CD14-positive monocyte (primary cell): ENCODE measurements at regions of chr15 and their contacts with region 1.

Region 1: DNA sequence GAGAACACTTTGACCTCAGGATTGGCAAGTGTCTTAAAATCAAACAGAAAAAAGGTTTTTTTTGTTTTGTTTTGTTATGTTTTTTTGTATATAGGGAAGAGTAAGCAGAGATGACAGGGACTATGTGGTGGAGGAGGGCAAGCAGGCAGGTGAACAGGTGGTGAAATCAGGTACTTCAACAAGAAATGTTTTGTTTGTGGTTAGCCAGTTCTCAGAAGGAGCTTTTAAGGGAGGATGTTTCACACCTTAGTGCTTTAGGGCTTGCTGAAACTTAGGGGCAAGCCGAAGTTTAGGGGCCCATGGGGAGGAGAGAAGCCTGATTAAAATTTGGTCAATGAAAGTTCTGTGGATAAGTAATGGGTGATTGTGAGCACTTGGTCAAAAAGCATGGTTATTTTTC is 370.7 kb upstream of the SLCO3A1 start:
- DNase-seq: no peak
- H3K4me3 ChIP-seq: no peak overlapping the region
- H3K4me3 Mint-ChIP-seq: no peak overlapping the region
- H3K27ac ChIP-seq: no peak overlapping the region
- H3K27ac Mint-ChIP-seq: no peak overlapping the region
- H3K4me1 ChIP-seq: no peaks in the 10 kb centered on the region
- H3K4me1 Mint-ChIP-seq: peaks cover 2% of the 10 kb centered on the region
- H3K27me3 ChIP-seq: no peaks in the 10 kb centered on the region
- H3K27me3 Mint-ChIP-seq: peaks cover 2 to 3% (median 3%) of the 10 kb centered on the region in 3 donors
- CTCF ChIP-seq: no peak

Region 2: GRCh38 chr15:91407237-91407889 is 75.4 kb before region 1 on chr15:
- intact Hi-C with region 1: no loop called
- DNase-seq: no peak
- H3K4me3 ChIP-seq: no peak overlapping the region
- H3K4me3 Mint-ChIP-seq: no peak overlapping the region
- H3K27ac ChIP-seq: no peak overlapping the region
- H3K27ac Mint-ChIP-seq: no peak overlapping the region
- H3K4me1 ChIP-seq: peaks cover 3% of the 10 kb centered on the region in 2 donors
- H3K4me1 Mint-ChIP-seq: peaks cover 5% of the 10 kb centered on the region
- H3K27me3 ChIP-seq: no peaks in the 10 kb centered on the region
- H3K27me3 Mint-ChIP-seq: no peaks in the 10 kb centered on the region
- CTCF ChIP-seq: no peak

Region 3: DNA sequence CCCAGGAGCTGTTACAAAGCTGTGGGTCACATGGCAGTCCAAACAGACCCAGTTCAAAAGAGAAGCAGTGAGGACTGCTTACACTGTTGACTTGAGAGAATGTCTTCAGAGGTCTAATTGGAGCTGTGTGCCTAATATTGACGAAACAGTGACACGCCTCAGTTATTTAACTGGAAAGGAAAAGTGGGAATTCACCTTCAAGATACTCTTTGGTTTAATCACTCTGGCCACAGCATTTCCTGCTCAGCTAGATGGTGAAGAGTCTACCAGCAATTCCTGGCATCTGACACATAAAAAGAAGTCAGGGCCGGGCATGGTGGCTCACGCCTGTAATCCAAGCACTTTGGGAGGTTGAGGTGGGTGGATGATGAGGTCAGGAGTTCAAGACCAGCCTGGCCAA is 56.4 kb before region 1 on chr15:
- intact Hi-C with region 1: loop called in 1 of 2 experiments (anchors 10 kb)
- DNase-seq: no peak
- H3K4me3 ChIP-seq: no peak overlapping the region
- H3K4me3 Mint-ChIP-seq: no peak overlapping the region
- H3K27ac ChIP-seq: no peak overlapping the region
- H3K27ac Mint-ChIP-seq: no peak overlapping the region
- H3K4me1 ChIP-seq: peaks cover 0 to 4% of the 10 kb centered on the region in 2 donors
- H3K4me1 Mint-ChIP-seq: peaks cover 5% of the 10 kb centered on the region
- H3K27me3 ChIP-seq: no peaks in the 10 kb centered on the region
- H3K27me3 Mint-ChIP-seq: peaks cover 0 to 5% (median 2%) of the 10 kb centered on the region in 3 donors
- CTCF ChIP-seq: no peak